ENCODE measurements at regions of chr1 and their contacts with region 1.

Region 1: DNA sequence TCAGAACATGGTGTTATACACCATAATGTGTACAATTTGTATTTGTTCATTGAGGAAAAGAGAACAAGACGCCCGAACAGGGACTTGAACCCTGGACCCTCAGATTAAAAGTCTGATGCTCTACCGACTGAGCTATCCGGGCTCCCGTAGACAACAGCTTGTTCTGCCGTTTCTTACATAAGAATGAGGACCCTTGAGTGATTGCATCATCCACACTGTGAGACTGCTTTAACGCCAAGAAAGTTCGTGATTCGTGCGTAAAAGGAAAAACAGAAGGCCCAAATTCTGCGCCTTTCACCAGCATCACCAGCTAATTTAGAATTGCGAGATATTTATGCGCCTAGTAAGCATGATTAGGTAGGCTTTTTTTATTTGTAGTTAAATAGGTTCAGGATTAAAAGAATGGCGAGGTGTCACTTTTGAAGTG is 9.2 kb upstream of the MDM4 start:
- DNase-seq: peak; percentile 57 to 96 (median 93)
- ATAC-seq: peak; percentile 83
- H3K4me3 ChIP-seq: peak overlapping the region; percentile 66
- H3K4me3 Mint-ChIP-seq: peak overlapping the region; percentile 81 to 98 (median 94)
- H3K27ac ChIP-seq: peak overlapping the region; percentile 90
- H3K27ac Mint-ChIP-seq: peak overlapping the region; percentile 95 to 100 (median 99)
- H3K4me1 ChIP-seq: peaks cover 11 to 20% of the 10 kb centered on the region in 2 donors
- H3K4me1 Mint-ChIP-seq: peaks cover 19 to 57% (median 44%) of the 10 kb centered on the region in 7 donors
- H3K27me3 ChIP-seq: no peaks in the 10 kb centered on the region
- H3K27me3 Mint-ChIP-seq: peaks cover 0 to 6% (median 4%) of the 10 kb centered on the region in 5 donors

Region 2: DNA sequence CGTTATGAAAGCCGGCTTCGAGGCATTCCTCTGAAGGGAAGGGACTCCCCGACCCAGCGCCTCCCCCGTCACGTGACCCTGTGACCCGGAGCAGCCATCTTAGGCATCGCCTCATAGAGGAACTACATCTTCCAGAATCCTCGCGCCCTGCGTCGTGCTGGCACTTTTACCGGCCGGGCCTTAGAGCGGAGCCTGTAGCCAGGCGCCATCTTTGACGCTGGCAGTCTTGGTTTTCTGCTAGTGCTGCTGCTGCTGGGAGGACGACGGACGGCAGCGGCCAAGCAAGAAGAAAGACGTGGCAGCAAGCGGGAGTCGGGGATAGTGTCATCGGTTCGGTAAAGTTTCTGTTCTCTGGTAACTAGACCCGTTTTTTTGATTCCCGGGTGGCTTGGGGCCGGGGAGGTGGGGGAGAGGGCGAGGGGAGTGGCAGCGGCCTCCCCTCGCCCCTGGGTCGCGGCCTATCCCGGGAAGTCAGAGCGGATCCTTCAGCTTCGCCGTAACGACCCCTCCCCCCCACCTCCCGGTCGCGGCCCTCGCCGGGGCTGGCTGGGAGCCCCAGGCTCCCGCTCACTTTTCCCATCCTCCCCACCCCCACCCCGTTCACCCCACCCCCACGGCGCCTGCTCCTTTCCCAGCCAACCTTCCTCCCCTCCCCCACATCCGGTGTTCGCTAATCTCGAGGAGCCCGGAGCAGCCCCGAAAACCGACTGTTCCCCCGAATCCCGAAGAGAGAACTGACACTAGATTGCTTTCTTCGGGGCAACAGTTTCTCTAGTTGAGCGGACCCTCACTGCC is 711.3 kb before region 1 on chr1 and contains the starts of genes ZBED6 and ZC3H11A:
- CTCF ChIA-PET with region 1: no interaction called
- POLR2A ChIA-PET with region 1: no interaction called
- intact Hi-C with region 1: loop called in 1 of 2 experiments (anchors 5 kb)
- DNase-seq: peak; percentile 85 to 100 (median 97)
- ATAC-seq: peak; percentile 99
- H3K4me3 ChIP-seq: peak within 1 kb of the TSS; percentile 80
- H3K4me3 Mint-ChIP-seq: peak within 1 kb of the TSS; percentile 94 to 98 (median 96)
- H3K27ac ChIP-seq: peak within 1 kb of the TSS; percentile 80
- H3K27ac Mint-ChIP-seq: peak within 1 kb of the TSS; percentile 82 to 98 (median 96)
- H3K4me1 ChIP-seq: peaks cover 35 to 36% of the 10 kb centered on the region in 2 donors
- H3K4me1 Mint-ChIP-seq: peaks cover 18 to 55% (median 48%) of the 10 kb centered on the region in 7 donors
- H3K27me3 ChIP-seq: no peaks in the 10 kb centered on the region
- H3K27me3 Mint-ChIP-seq: no peaks in the 10 kb centered on the region
- total RNA-seq, gene ZBED6: 23.8 to 36.1 (median 31.9) TPM
- total RNA-seq, gene ZC3H11A: 70.9 to 138 (median 91.6) TPM

Region 3: GRCh38 chr1:204411451-204412204 is 95.3 kb before region 1 on chr1 and contains the start of gene PPP1R15B:
- CTCF ChIA-PET with region 1: interaction called, 4 read pairs
- POLR2A ChIA-PET with region 1: interaction called, 9 read pairs
- intact Hi-C with region 1: loop called (anchors 1 kb)
- DNase-seq: peak; percentile 92 to 99 (median 98)
- ATAC-seq: peak; percentile 91
- H3K4me3 ChIP-seq: peak within 1 kb of the TSS; percentile 99
- H3K4me3 Mint-ChIP-seq: peak within 1 kb of the TSS; percentile 92 to 99 (median 97)
- H3K27ac ChIP-seq: peak within 1 kb of the TSS; percentile 100
- H3K27ac Mint-ChIP-seq: peak within 1 kb of the TSS; percentile 97 to 100 (median 99)
- H3K4me1 ChIP-seq: peaks cover 0 to 5% of the 10 kb centered on the region in 2 donors
- H3K4me1 Mint-ChIP-seq: peaks cover 8 to 23% (median 14%) of the 10 kb centered on the region in 7 donors
- H3K27me3 ChIP-seq: no peaks in the 10 kb centered on the region
- H3K27me3 Mint-ChIP-seq: no peaks in the 10 kb centered on the region
- total RNA-seq, gene PPP1R15B: 69.5 to 175 (median 73.0) TPM

Region 4: GRCh38 chr1:204446370-204447111 is 60.4 kb before region 1 on chr1:
- CTCF ChIA-PET with region 1: interaction called, 434 read pairs
- POLR2A ChIA-PET with region 1: interaction called, 16 read pairs
- intact Hi-C with region 1: loop called (anchors 1 kb)
- DNase-seq: peak; percentile 61 to 83 (median 75)
- ATAC-seq: peak; percentile 97
- H3K4me3 ChIP-seq: no peak overlapping the region
- H3K4me3 Mint-ChIP-seq: no peak overlapping the region
- H3K27ac ChIP-seq: peak overlapping the region; percentile 4
- H3K27ac Mint-ChIP-seq: peak overlapping the region; percentile 54 to 92 (median 73)
- H3K4me1 ChIP-seq: peaks cover 0 to 8% of the 10 kb centered on the region in 2 donors
- H3K4me1 Mint-ChIP-seq: peaks cover 3 to 32% (median 10%) of the 10 kb centered on the region in 7 donors
- H3K27me3 ChIP-seq: no peaks in the 10 kb centered on the region
- H3K27me3 Mint-ChIP-seq: no peaks in the 10 kb centered on the region

Region 5: DNA sequence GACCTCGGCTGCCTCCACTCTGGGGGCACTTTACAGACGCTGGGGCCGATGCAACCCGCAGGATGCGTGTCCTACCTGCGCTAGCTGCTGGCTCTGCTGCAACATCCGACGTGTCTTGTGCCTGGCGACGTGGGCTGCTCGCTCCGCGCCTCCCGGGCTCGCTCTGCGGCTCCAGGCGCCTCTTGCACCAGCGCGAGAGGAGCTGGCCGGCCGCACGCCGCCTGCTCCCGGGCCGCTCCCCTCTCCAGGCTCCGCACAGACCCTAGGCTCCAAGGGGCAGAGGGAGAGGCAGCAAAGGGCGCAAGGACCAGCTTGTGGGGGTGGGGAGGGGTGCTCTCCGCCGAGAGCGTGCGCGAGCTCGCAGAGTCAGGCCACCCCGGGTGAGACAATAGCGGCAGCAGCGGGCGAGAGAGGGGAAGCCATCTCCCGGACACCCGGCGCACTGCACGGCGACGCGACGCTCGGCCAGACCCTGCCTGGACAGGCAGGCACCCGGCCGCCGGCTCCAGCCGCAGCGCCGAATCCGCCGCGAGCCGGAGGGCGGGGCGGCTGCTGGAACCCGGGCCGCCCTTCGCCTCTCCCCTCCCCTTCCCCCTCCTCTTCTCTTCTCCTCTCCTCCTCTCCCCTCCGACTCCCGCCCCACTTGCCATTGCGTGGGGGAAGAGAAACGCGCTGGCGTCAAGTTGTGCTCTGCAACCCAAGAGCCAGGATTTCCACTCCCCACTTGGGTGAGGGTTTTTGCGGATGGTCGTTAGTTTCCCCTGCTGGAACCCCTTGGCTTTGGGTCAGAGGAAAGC is 12.5 kb before region 1 on chr1 and contains the start of gene PIK3C2B:
- CTCF ChIA-PET with region 1: interaction called, 19 read pairs
- POLR2A ChIA-PET with region 1: interaction called, 35 read pairs
- intact Hi-C with region 1: loop called (anchors 1 kb)
- DNase-seq: peak; percentile 54 to 80 (median 72)
- ATAC-seq: peak; percentile 83
- H3K4me3 ChIP-seq: peak within 1 kb of the TSS; percentile 84
- H3K4me3 Mint-ChIP-seq: peak within 1 kb of the TSS; percentile 92 to 98 (median 95)
- H3K27ac ChIP-seq: peak within 1 kb of the TSS; percentile 87
- H3K27ac Mint-ChIP-seq: peak within 1 kb of the TSS; percentile 83 to 98 (median 93)
- H3K4me1 ChIP-seq: peaks cover 23 to 35% of the 10 kb centered on the region in 2 donors
- H3K4me1 Mint-ChIP-seq: peaks cover 37 to 89% (median 73%) of the 10 kb centered on the region in 7 donors
- H3K27me3 ChIP-seq: no peaks in the 10 kb centered on the region
- H3K27me3 Mint-ChIP-seq: peaks cover 0 to 2% (median 0%) of the 10 kb centered on the region in 5 donors
- total RNA-seq, gene PIK3C2B: 26.8 to 41.9 (median 32.5) TPM

Region 6: GRCh38 chr1:204565617-204566582 is 58.9 kb after region 1 on chr1:
- CTCF ChIA-PET with region 1: interaction called, 4 read pairs
- POLR2A ChIA-PET with region 1: interaction called, 5 read pairs
- intact Hi-C with region 1: loop called in 1 of 2 experiments (anchors 1 kb)
- DNase-seq: peak in 8 of 9 donors; percentile 47 to 80 (median 68)
- ATAC-seq: peak; percentile 92
- H3K4me3 ChIP-seq: no peak overlapping the region
- H3K4me3 Mint-ChIP-seq: peak overlapping the region in 5 of 10 donors; percentile 3 to 51 (median 15)
- H3K27ac ChIP-seq: no peak overlapping the region
- H3K27ac Mint-ChIP-seq: peak overlapping the region; percentile 58 to 84 (median 74)
- H3K4me1 ChIP-seq: peaks cover 14 to 37% of the 10 kb centered on the region in 2 donors
- H3K4me1 Mint-ChIP-seq: peaks cover 22 to 62% (median 55%) of the 10 kb centered on the region in 7 donors
- H3K27me3 ChIP-seq: no peaks in the 10 kb centered on the region
- H3K27me3 Mint-ChIP-seq: no peaks in the 10 kb centered on the region

Region 7: GRCh38 chr1:204578867-204579664 is 72.1 kb after region 1 on chr1:
- CTCF ChIA-PET with region 1: no interaction called
- POLR2A ChIA-PET with region 1: no interaction called
- intact Hi-C with region 1: no loop called
- DNase-seq: peak in 5 of 9 donors; percentile 21 to 44 (median 27)
- ATAC-seq: peak; percentile 60
- H3K4me3 ChIP-seq: peak overlapping the region; percentile 47
- H3K4me3 Mint-ChIP-seq: peak overlapping the region; percentile 77 to 88 (median 82)
- H3K27ac ChIP-seq: peak overlapping the region; percentile 67
- H3K27ac Mint-ChIP-seq: peak overlapping the region; percentile 83 to 97 (median 89)
- H3K4me1 ChIP-seq: peaks cover 9 to 26% of the 10 kb centered on the region in 2 donors
- H3K4me1 Mint-ChIP-seq: peaks cover 14 to 43% (median 35%) of the 10 kb centered on the region in 7 donors
- H3K27me3 ChIP-seq: no peaks in the 10 kb centered on the region
- H3K27me3 Mint-ChIP-seq: no peaks in the 10 kb centered on the region

Region 8: DNA sequence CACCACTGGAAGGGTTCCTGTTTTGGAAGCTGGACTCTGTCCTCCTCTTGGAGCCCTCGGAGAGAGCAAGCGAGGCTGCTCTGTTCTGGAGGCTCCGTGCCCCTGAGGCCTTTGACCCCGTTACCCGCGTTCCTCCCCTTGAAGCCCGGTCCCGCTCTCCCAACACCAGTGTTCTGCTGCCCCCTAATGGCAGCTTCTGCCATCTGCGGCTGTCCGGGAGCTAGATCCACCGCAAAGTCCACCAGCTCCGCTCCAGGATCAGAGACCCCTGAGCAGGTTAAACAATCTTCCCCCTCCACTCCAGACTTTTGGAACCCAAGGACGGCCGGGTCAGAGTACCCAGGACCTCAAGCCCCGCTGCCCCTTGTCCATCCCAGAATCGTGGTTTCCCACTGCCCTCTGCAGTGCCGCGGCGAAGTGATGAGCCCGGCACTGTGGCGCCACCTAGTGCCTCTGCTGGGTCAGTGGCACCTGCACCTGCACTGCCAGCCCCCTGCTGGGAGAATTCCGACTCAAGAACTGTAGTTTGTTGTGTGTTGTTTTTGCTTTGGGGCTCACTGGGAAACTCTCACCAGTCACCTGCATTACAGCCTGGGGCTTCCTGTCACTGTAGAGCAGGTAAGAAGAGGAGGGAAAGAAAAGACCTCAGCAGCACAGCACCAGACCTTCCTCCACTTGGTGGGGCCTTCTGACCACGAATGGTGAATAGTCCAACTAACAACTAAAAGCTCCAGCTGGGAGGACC is 300.1 kb after region 1 on chr1:
- CTCF ChIA-PET with region 1: interaction called, 3 read pairs
- POLR2A ChIA-PET with region 1: no interaction called
- intact Hi-C with region 1: loop called (anchors 1 to 2 kb)
- DNase-seq: peak; percentile 74 to 93 (median 85)
- ATAC-seq: peak; percentile 97
- H3K4me3 ChIP-seq: peak overlapping the region; percentile 76
- H3K4me3 Mint-ChIP-seq: peak overlapping the region; percentile 40 to 97 (median 88)
- H3K27ac ChIP-seq: no peak overlapping the region
- H3K27ac Mint-ChIP-seq: peak overlapping the region; percentile 40 to 81 (median 63)
- H3K4me1 ChIP-seq: no peaks in the 10 kb centered on the region
- H3K4me1 Mint-ChIP-seq: peaks cover 0 to 22% (median 15%) of the 10 kb centered on the region in 7 donors
- H3K27me3 ChIP-seq: no peaks in the 10 kb centered on the region
- H3K27me3 Mint-ChIP-seq: peaks cover 0 to 28% (median 0%) of the 10 kb centered on the region in 5 donors

Measured in naive thymus-derived CD4-positive, alpha-beta T cell (primary cell).